ENCODE measurements at regions of chr13 and their contacts with region 1.

Region 1: DNA sequence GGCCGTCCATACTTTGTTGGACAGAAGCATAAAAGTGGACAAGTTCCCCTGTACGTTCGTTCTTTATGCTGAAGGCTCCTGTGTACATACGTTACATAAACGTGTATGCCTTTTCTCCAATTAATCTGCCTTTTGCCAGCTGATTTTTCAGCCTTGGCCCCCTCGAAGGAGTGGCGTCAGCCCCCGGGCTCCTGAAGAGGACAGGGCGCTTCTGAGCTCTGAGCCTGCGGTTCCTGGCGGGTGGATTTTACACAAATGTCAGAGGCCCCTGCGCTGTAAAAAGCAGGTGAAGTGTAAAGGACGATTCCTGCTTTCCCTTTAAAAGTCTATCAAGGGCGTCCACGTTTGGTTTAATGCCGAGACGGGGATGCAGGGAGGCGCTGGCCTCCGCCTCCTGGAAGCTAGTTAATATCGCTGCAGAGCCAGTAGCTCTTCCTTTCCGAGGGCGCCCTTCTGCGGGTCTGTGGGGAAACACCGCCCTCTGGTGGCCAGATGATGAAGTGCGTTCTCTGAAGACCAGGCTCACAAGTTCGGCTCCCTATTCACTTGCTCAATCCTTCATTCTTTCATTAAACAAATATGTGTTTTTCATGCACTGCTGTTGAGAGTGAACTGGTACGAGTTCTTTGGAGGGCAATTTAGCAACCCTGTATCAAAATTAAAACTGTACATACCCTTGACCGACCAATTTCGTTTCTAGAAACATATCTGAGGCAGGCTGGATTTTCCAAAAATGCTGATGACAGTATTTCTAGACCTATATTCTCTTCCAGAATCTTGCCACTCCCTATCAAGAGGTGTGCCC is 62.0 kb downstream of the GPR12 start:
- DNase-seq: peak; percentile 86
- ATAC-seq: peak; percentile 84

Region 2: GRCh38 chr13:26186118-26186870 is 512.3 kb before region 1 on chr13:
- intact Hi-C with region 1: loop called (anchors 2 kb)
- DNase-seq: peak; percentile 94
- ATAC-seq: peak; percentile 95

Region 3: GRCh38 chr13:26482451-26483197 is 216.0 kb before region 1 on chr13:
- intact Hi-C with region 1: loop called (anchors 2 kb)
- DNase-seq: no peak
- ATAC-seq: no peak

Region 4: DNA sequence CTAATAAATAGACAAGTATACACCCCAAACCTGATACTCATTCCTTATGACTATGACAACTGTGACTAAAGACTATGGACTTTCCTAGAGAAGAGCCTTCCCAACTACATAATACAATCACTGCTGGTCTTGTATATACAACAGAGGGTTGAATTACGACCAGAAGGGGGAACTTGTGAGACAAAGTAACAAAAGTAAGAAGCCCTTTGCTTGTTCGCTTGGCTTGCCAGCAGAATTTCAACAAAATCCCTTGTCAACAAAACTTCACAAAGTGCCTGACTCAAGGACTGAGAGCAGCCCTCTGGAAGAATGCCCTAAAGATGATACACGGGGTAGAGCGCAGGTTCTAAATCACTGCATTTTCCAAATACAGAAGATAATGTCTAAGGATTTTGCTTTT is 41.7 kb before region 1 on chr13:
- intact Hi-C with region 1: loop called (anchors 5 kb)
- DNase-seq: no peak
- ATAC-seq: no peak

Region 5: GRCh38 chr13:26721251-26722121 is 22.9 kb after region 1 on chr13:
- intact Hi-C with region 1: no loop called
- DNase-seq: peak; percentile 70
- ATAC-seq: no peak

Measured in Right ventricle myocardium inferior (tissue), 1 donor.